HepG2 (cell line): ENCODE measurements at regions of chr5 and their contacts with region 1.

Region 1: DNA sequence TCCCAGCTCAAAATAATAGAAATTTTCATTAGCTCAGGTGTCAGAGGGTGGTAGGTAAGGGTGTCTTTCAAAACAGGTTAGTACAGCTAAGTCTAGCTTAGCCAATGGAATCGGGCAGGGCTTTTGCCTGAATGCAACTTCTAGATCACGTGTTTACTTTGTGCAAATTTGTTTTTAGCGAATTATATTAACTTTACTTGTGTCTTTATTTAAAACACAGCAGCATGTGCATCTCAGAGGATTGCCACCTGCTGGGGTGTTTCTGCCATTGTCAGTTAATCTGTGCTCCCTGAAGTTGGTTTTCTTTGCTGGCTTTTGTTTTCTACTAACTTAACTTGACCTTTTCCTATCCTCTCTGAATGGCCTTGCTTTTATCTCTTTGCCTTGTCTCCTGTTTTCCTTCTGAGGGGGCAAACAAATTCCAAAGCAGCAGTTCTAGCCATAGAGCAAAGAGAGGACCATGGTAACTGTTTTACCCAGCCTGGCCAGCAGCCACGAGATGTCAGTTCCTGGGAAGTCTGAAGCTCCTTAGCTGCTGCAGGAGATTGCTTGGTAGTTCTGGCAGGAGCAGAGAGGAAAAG is 67.6 kb downstream of the ARHGEF28 start:
- DNase-seq: peak; percentile 56
- ATAC-seq: peak; percentile 87
- H3K4me3 ChIP-seq: no peak overlapping the region
- H3K27ac ChIP-seq: peak overlapping the region; percentile 43
- H3K4me1 ChIP-seq: peaks cover 33% of the 10 kb centered on the region
- H3K27me3 ChIP-seq: no peaks in the 10 kb centered on the region
- CTCF ChIP-seq: peak; percentile 68
- EP300 ChIP-seq: no peak
- POLR2A ChIP-seq: no peak
- RAD21 ChIP-seq: peak; percentile 61; the same call in 1 of the 2 replicates

Region 2: GRCh38 chr5:73093943-73094342 is 599.6 kb before region 1 on chr5:
- CTCF ChIA-PET with region 1: no interaction called
- POLR2A ChIA-PET with region 1: no interaction called
- in situ Hi-C with region 1: no loop called
- intact Hi-C with region 1: no loop called
- DNase-seq: no peak
- ATAC-seq: no peak
- H3K4me3 ChIP-seq: no peak overlapping the region
- H3K27ac ChIP-seq: no peak overlapping the region
- H3K4me1 ChIP-seq: no peaks in the 10 kb centered on the region
- H3K27me3 ChIP-seq: no peaks in the 10 kb centered on the region
- CTCF ChIP-seq: no peak
- EP300 ChIP-seq: no peak
- POLR2A ChIP-seq: no peak
- RAD21 ChIP-seq: no peak

Region 3: DNA sequence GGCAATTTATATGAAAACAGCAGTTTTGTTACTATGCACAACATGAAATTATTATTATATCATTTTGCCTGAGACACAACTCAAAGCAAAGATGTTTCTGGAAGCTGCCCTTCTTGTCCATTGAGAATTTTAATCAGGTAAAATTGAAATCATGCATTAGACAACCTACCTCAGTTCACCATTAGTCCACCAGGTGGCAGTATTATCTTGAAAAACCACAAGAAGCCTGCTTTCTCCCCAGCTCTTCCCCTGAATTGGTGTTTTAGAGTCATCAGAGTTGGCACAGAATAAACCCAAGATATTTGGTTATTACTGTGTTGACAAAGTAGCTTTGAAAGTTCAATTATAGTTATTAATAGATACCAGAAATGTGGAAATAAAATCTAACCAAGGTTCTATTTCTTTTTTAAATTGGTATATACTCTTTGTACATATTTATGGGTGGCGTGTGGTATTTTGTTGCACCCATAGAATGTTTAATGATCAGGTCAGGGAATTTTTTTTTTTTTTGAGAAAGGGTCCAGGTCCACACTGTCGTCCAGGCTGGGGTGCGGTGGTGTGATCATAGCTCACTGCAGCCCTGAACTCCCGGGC is 102.4 kb before region 1 on chr5:
- CTCF ChIA-PET with region 1: interaction called, 18 read pairs
- POLR2A ChIA-PET with region 1: no interaction called
- in situ Hi-C with region 1: loop called (anchors 10 kb)
- intact Hi-C with region 1: loop called (anchors 1 kb)
- DNase-seq: peak; percentile 79
- ATAC-seq: peak; percentile 77
- H3K4me3 ChIP-seq: no peak overlapping the region
- H3K27ac ChIP-seq: no peak overlapping the region
- H3K4me1 ChIP-seq: peaks cover 9% of the 10 kb centered on the region
- H3K27me3 ChIP-seq: no peaks in the 10 kb centered on the region; a peak in 1 of 5 replicates
- CTCF ChIP-seq: peak; percentile 78
- EP300 ChIP-seq: no peak
- POLR2A ChIP-seq: no peak
- RAD21 ChIP-seq: peak; percentile 81

Region 4: GRCh38 chr5:73596705-73597328 is 96.8 kb before region 1 on chr5:
- CTCF ChIA-PET with region 1: interaction called, 18 read pairs
- POLR2A ChIA-PET with region 1: no interaction called
- in situ Hi-C with region 1: loop called (anchors 10 kb)
- intact Hi-C with region 1: loop called (anchors 1 kb)
- DNase-seq: peak; percentile 60
- ATAC-seq: peak; percentile 79
- H3K4me3 ChIP-seq: no peak overlapping the region
- H3K27ac ChIP-seq: no peak overlapping the region
- H3K4me1 ChIP-seq: no peaks in the 10 kb centered on the region
- H3K27me3 ChIP-seq: no peaks in the 10 kb centered on the region
- CTCF ChIP-seq: peak; percentile 63
- EP300 ChIP-seq: no peak
- POLR2A ChIP-seq: no peak
- RAD21 ChIP-seq: no peak